ENCODE measurements at regions of chr4 and their contacts with region 1.

Region 1: GRCh38 chr4:8917868-8918783 is 46.5 kb upstream of the HMX1 start:
- DNase-seq: peak; percentile 70
- ATAC-seq: peak; percentile 88

Region 2: GRCh38 chr4:8607603-8608481 is 310.3 kb before region 1 on chr4:
- intact Hi-C with region 1: loop called (anchors 10 kb)
- DNase-seq: no peak
- ATAC-seq: peak; percentile 59

Region 3: DNA sequence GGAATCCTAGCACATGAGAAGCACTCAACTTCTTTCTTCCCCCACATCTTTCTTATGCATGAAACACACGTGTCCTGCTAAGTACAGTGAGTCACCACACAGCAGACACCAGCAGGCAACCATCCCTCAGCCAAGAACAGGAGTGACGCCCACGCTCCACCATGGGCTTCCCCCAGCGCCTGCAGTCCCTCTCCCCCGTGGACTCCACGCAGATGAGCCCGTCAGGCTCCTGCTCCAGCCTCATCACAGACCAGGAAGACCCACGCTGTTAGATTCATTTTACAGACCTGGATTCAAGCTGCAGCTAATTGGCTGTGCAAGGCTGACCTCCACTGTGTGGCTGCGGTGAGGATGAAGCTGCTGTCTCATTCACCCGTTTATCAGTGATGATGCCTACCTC is 63.2 kb before region 1 on chr4:
- intact Hi-C with region 1: no loop called
- DNase-seq: peak; percentile 13
- ATAC-seq: no peak